Right cardiac atrium (tissue), 5 donors: ENCODE measurements at regions of chr2 and their contacts with region 1.

Region 1: GRCh38 chr2:105121434-105121833 is 83.6 kb downstream of the MRPS9 start:
- DNase-seq: no peak
- ATAC-seq: no peak
- H3K4me3 ChIP-seq: no peak overlapping the region
- H3K27ac ChIP-seq: no peak overlapping the region
- H3K4me1 ChIP-seq: no peaks in the 10 kb centered on the region
- H3K27me3 ChIP-seq: no peaks in the 10 kb centered on the region

Region 2: GRCh38 chr2:104825124-104825865 is 296.1 kb before region 1 on chr2:
- intact Hi-C with region 1: no loop called
- DNase-seq: no peak
- ATAC-seq: peak in 1 of 2 donors; percentile 43
- H3K4me3 ChIP-seq: no peak overlapping the region
- H3K27ac ChIP-seq: no peak overlapping the region
- H3K4me1 ChIP-seq: no peaks in the 10 kb centered on the region
- H3K27me3 ChIP-seq: no peaks in the 10 kb centered on the region

Region 3: DNA sequence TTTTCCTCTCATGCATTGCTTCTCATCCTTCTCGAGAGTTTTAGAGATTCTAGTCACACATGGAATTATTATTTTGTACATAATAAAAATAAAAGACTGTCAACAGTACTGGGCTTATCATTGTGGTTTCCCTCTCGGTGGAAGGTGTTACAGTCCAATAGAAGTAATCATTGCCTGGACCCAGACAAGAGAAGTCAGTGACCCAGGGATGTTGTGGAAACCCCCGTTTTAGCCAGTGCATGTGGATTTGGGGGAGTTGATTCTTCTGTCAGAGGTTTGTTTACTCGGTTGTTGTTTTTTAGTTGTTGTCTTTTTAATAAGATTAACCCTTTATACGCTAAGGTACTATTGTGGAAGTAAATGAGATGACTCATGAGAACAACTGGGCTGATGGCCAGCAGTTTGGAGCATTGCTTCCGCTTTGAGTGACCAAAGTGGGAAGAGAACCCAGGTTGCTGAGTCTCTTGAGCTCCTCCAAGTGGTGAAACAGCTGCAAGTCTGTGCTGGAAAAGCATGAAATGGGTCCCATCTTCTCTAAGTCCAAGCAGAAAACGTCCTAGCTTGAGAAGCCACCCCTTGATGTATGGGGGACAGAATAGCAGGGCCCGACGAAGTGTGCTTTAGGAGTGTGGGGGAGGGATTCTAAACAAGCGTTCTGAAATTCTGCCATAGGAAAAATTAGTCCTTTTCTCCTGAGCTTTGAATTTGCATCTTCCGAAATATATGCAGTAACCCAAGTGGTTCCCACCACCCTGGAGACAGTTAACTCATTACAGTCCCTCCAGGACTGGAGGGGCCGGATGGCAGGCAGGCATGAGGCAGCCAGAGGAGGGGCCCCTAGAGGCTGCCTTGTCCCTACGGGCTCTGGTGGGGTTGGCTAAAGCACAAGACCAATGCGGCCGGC is 58.3 kb after region 1 on chr2:
- intact Hi-C with region 1: loop called in 1 of 4 experiments (anchors 5 kb)
- DNase-seq: peak in 2 of 3 donors; percentile 38 to 70
- ATAC-seq: no peak
- H3K4me3 ChIP-seq: no peak overlapping the region
- H3K27ac ChIP-seq: no peak overlapping the region
- H3K4me1 ChIP-seq: no peaks in the 10 kb centered on the region
- H3K27me3 ChIP-seq: no peaks in the 10 kb centered on the region

Region 4: DNA sequence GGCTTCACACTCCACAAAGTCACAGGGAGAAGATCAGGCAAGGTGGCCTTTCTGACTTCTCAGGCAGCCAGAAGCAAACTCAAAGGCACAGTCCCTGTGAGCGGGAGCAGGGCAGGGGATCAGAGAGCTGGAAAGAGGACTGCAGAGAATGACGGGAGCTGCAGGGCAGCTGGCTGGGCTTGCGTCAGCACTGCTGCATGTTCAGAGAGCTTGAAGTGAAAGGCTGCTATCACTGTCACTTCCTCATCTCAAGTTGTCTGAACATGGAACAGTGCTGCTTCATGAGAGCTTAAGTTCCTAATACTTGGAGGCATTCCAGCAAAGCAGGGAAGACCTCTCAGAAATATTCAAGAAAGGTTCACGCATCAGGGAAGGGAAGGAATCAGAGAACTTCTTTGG is 187.7 kb after region 1 on chr2:
- intact Hi-C with region 1: no loop called
- DNase-seq: peak in 2 of 3 donors; percentile 70 to 74
- ATAC-seq: peak; percentile 79 to 81
- H3K4me3 ChIP-seq: no peak overlapping the region
- H3K27ac ChIP-seq: no peak overlapping the region
- H3K4me1 ChIP-seq: no peaks in the 10 kb centered on the region
- H3K27me3 ChIP-seq: no peaks in the 10 kb centered on the region

Region 5: DNA sequence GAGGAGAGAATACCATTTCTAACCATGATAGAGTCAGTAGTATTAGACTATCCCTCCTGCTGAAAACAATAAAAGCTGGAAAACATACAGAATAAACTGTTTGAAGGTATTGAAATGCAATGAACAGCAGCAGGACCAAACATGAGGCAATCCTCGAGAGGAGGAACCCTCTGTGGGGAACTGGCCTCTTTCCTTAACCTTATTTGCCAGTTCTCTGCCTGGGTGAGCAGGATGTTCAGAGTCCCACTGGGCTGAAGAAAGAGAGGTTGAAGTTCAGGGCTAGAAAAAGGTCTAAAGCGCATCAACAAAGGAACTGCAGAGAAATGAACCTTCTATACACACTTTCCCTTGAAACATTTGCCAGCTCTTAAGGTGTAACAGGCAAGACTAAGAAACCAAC is 357.2 kb after region 1 on chr2:
- intact Hi-C with region 1: no loop called
- DNase-seq: no peak
- ATAC-seq: no peak
- H3K4me3 ChIP-seq: no peak overlapping the region
- H3K27ac ChIP-seq: no peak overlapping the region
- H3K4me1 ChIP-seq: no peaks in the 10 kb centered on the region
- H3K27me3 ChIP-seq: no peaks in the 10 kb centered on the region